ENCODE measurements at regions of chr18 and their contacts with region 1.

Region 1: GRCh38 chr18:21509062-21509461 is 91.4 kb downstream of the ESCO1 start:
- DNase-seq: no peak
- H3K4me3 Mint-ChIP-seq: no peak overlapping the region
- H3K27ac Mint-ChIP-seq: no peak overlapping the region
- H3K4me1 Mint-ChIP-seq: no peaks in the 10 kb centered on the region
- H3K27me3 Mint-ChIP-seq: no peaks in the 10 kb centered on the region

Region 2: GRCh38 chr18:21444465-21445023 is 64.5 kb before region 1 on chr18:
- CTCF ChIA-PET with region 1: no interaction called
- POLR2A ChIA-PET with region 1: no interaction called
- intact Hi-C with region 1: loop called (anchors 10 kb)
- DNase-seq: no peak
- H3K4me3 Mint-ChIP-seq: no peak overlapping the region
- H3K27ac Mint-ChIP-seq: no peak overlapping the region
- H3K4me1 Mint-ChIP-seq: no peaks in the 10 kb centered on the region
- H3K27me3 Mint-ChIP-seq: peaks cover 10% of the 10 kb centered on the region

Measured in activated CD4-positive, alpha-beta memory T cell treated with anti-CD3 and anti-CD28 coated beads for 36 hours (primary cell).